ENCODE measurements at regions of chr17 and their contacts with region 1.

Region 1: GRCh38 chr17:64608540-64608981 is 53.5 kb downstream of the SMURF2 start:
- DNase-seq: no peak
- H3K4me3 Mint-ChIP-seq: no peak overlapping the region
- H3K27ac Mint-ChIP-seq: no peak overlapping the region
- H3K4me1 Mint-ChIP-seq: peaks cover 10% of the 10 kb centered on the region
- H3K27me3 Mint-ChIP-seq: no peaks in the 10 kb centered on the region
- CTCF ChIP-seq: no peak

Region 2: GRCh38 chr17:64572638-64573154 is 35.9 kb before region 1 on chr17:
- CTCF ChIA-PET with region 1: no interaction called
- intact Hi-C with region 1: loop called (anchors 5 kb)
- DNase-seq: no peak
- H3K4me3 Mint-ChIP-seq: no peak overlapping the region
- H3K27ac Mint-ChIP-seq: no peak overlapping the region
- H3K4me1 Mint-ChIP-seq: no peaks in the 10 kb centered on the region
- H3K27me3 Mint-ChIP-seq: no peaks in the 10 kb centered on the region
- CTCF ChIP-seq: no peak

Region 3: DNA sequence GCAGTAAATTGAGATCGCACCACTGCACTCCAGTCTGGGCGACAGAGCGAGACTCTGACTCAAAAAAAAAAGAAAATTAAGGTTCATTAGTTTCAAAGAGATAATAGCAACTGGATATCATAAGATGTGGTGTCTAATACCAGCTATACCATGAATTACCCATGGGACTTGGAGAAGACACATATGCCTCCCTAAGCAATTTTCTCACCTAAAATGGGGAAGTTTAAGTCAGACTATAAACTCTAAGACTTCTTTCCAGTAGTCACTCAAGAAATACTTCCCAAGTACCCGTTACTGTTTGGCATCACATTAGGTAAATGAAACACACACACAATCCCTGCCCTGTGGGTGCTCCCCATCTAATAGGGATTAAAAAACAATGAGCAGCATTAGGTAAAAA is 31.0 kb after region 1 on chr17:
- CTCF ChIA-PET with region 1: no interaction called
- intact Hi-C with region 1: no loop called
- DNase-seq: no peak
- H3K4me3 Mint-ChIP-seq: no peak overlapping the region
- H3K27ac Mint-ChIP-seq: no peak overlapping the region
- H3K4me1 Mint-ChIP-seq: no peaks in the 10 kb centered on the region
- H3K27me3 Mint-ChIP-seq: no peaks in the 10 kb centered on the region
- CTCF ChIP-seq: no peak

Measured in Calu3 (cell line).